ENCODE measurements at regions of chr10 and their contacts with region 1.

Region 1: GRCh38 chr10:82874671-82875070 is 999.7 kb downstream of the NRG3 start:
- DNase-seq: no peak
- H3K4me3 ChIP-seq: no peak overlapping the region
- H3K27ac ChIP-seq: no peak overlapping the region
- H3K4me1 ChIP-seq: no peaks in the 10 kb centered on the region
- H3K27me3 ChIP-seq: no peaks in the 10 kb centered on the region
- CTCF ChIP-seq: no peak
- POLR2A ChIP-seq: no peak

Region 2: GRCh38 chr10:81882011-81882410 is 992.7 kb before region 1 on chr10:
- intact Hi-C with region 1: loop called (anchors 10 kb)
- DNase-seq: no peak
- H3K4me3 ChIP-seq: no peak overlapping the region
- H3K27ac ChIP-seq: no peak overlapping the region
- H3K4me1 ChIP-seq: no peaks in the 10 kb centered on the region
- H3K27me3 ChIP-seq: no peaks in the 10 kb centered on the region
- CTCF ChIP-seq: no peak
- POLR2A ChIP-seq: no peak

Region 3: GRCh38 chr10:82383350-82383749 is 491.3 kb before region 1 on chr10:
- intact Hi-C with region 1: loop called (anchors 5 kb)
- DNase-seq: no peak
- H3K4me3 ChIP-seq: no peak overlapping the region
- H3K27ac ChIP-seq: no peak overlapping the region
- H3K4me1 ChIP-seq: no peaks in the 10 kb centered on the region
- H3K27me3 ChIP-seq: no peaks in the 10 kb centered on the region
- CTCF ChIP-seq: no peak
- POLR2A ChIP-seq: no peak

Region 4: DNA sequence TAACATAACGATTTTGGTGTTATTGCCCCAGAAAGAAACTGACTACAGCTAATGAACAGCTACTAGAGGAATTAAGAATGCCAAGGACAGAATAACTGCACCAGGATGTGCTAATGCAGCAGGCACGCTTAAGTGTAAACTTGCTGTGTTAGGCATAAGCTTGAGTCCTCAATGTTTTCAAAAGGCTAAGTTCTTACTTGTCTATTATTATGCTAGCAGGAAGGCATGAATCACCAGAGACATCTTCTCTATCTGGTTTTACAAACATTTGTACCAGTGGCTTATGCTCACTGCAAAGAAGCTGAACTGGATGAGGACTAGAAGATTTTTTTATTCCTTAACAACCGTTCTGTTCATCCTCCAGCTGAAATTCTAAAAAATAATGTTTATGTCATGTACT is 35.6 kb after region 1 on chr10:
- intact Hi-C with region 1: no loop called
- DNase-seq: no peak
- H3K4me3 ChIP-seq: no peak overlapping the region
- H3K27ac ChIP-seq: no peak overlapping the region
- H3K4me1 ChIP-seq: no peaks in the 10 kb centered on the region
- H3K27me3 ChIP-seq: no peaks in the 10 kb centered on the region
- CTCF ChIP-seq: no peak
- POLR2A ChIP-seq: no peak

Region 5: GRCh38 chr10:83108565-83109333 is 234.1 kb after region 1 on chr10:
- intact Hi-C with region 1: no loop called
- DNase-seq: no peak
- H3K4me3 ChIP-seq: no peak overlapping the region
- H3K27ac ChIP-seq: no peak overlapping the region
- H3K4me1 ChIP-seq: no peaks in the 10 kb centered on the region
- H3K27me3 ChIP-seq: no peaks in the 10 kb centered on the region
- CTCF ChIP-seq: no peak
- POLR2A ChIP-seq: no peak

Measured in breast epithelium (tissue), 4 donors.